Right ventricle myocardium inferior (tissue), 1 donor: ENCODE measurements at regions of chr3 and their contacts with region 1.

Region 1: GRCh38 chr3:152909180-152909883 is 74.4 kb downstream of the P2RY1 start:
- DNase-seq: no peak
- ATAC-seq: peak; percentile 94

Region 2: DNA sequence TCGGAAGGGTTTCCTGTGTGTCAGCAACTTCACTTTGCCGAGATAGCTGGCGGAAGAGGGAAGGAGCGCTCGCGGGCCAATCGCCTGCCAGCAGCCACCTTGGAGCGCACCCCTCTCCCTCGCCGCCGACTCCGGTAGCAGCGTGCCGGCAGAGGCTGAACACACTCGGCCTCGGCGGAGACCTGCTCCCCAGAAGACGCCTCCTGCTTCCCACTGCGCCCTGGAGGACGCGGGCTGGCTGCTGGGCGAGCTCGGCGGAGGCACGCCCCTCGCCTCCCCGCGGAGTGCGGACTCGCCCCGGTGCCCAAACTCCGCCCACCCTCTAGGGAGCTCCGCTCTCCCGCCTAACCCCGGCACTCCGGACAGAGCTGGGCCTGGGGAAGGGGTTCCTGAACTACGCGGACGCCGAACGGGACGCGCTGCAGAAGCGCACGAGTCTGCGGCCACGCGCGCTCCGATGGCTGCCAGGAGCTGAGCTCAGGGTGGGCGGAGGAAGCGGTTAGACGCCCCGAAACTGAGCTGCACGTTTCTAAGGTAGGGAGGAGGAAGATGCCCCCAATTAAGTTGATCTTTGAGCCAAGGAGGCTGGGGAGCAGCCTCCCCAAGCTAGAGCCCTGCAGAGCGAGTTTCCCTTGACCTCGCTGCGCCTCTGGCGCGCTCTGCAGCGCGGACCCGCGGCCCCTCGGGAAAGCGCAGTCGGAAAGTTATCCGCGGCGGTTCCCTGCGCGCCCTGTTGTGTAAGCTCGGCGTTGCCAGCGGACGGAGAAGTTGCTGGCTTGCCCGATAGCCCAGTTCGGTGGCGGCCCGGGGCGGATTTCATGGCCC is 74.3 kb before region 1 on chr3 and contains the start of gene P2RY1:
- intact Hi-C with region 1: loop called (anchors 5 kb)
- DNase-seq: peak; percentile 85
- ATAC-seq: peak; percentile 92
- total RNA-seq, gene P2RY1: 10.1 TPM

Region 3: DNA sequence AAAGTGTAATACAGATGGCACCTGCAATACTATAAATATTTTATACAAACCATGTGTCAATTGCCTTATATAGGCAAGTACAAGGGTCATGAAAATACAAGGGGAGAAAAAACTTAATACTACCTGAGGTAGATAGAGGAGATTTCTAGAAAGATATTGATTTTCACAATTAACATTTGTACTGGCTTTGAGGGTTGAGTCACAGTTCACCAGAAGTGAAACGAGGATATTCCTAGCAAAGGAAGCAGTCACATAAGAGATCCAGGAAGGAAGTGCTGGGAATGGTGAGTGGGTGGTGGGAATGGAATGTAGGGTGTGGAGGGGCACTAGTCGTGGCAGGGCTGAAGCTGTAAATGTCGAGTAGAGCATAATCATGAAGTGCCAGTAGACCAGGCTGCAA is 34.3 kb after region 1 on chr3:
- intact Hi-C with region 1: no loop called
- DNase-seq: no peak
- ATAC-seq: no peak